Activated CD4-positive, alpha-beta T cell treated with anti-CD3 and anti-CD28 coated beads for 36 hours (primary cell): ENCODE measurements at regions of chr5 and their contacts with region 1.

Region 1: GRCh38 chr5:116013207-116013785 is 19.0 kb upstream of the ARL14EPL start:
- DNase-seq: no peak
- ATAC-seq: no peak
- H3K4me3 Mint-ChIP-seq: no peak overlapping the region
- H3K27ac Mint-ChIP-seq: no peak overlapping the region
- H3K4me1 Mint-ChIP-seq: no peaks in the 10 kb centered on the region
- H3K27me3 Mint-ChIP-seq: peaks cover 14% of the 10 kb centered on the region

Region 2: DNA sequence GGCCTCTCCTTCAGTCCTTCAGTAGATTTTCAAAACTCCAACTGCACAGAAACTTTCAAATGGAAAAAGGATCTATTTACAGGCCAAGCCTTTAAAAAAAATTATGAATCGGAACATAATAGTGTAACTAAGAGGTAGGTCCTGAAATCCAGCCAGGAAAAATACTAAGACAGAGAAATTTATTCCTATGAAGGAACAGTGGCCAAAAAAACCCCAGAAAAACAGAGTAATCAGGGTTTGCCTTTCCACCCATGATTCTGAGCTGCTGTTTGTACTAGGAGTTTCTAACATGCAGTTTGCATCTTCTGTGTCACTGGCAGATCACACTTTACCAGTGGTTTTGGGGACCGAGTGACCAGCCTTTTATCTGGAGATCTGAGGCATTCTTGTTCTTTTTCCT is 294.4 kb before region 1 on chr5:
- CTCF ChIA-PET with region 1: no interaction called
- POLR2A ChIA-PET with region 1: interaction called, 12 read pairs
- intact Hi-C with region 1: no loop called
- DNase-seq: no peak
- ATAC-seq: no peak
- H3K4me3 Mint-ChIP-seq: no peak overlapping the region
- H3K27ac Mint-ChIP-seq: no peak overlapping the region
- H3K4me1 Mint-ChIP-seq: no peaks in the 10 kb centered on the region
- H3K27me3 Mint-ChIP-seq: peaks cover 23% of the 10 kb centered on the region